ENCODE measurements at regions of chr2 and their contacts with region 1.

Region 1: GRCh38 chr2:210899131-210899530 is 342.7 kb downstream of the CPS1 start:
- DNase-seq: no peak
- ATAC-seq: no peak
- H3K4me3 Mint-ChIP-seq: no peak overlapping the region
- H3K27ac Mint-ChIP-seq: no peak overlapping the region
- H3K4me1 Mint-ChIP-seq: no peaks in the 10 kb centered on the region
- H3K27me3 Mint-ChIP-seq: no peaks in the 10 kb centered on the region
- CTCF ChIP-seq: no peak

Region 2: GRCh38 chr2:210873631-210874030 is 25.5 kb before region 1 on chr2:
- CTCF ChIA-PET with region 1: no interaction called
- POLR2A ChIA-PET with region 1: no interaction called
- intact Hi-C with region 1: loop called (anchors 2 kb)
- DNase-seq: no peak
- ATAC-seq: no peak
- H3K4me3 Mint-ChIP-seq: no peak overlapping the region
- H3K27ac Mint-ChIP-seq: no peak overlapping the region
- H3K4me1 Mint-ChIP-seq: no peaks in the 10 kb centered on the region
- H3K27me3 Mint-ChIP-seq: no peaks in the 10 kb centered on the region
- CTCF ChIP-seq: no peak

Measured in activated CD8-positive, alpha-beta T cell treated with anti-CD3 and anti-CD28 coated beads for 36 hours (primary cell).